ENCODE measurements at regions of chr15 and their contacts with region 1.

Region 1: DNA sequence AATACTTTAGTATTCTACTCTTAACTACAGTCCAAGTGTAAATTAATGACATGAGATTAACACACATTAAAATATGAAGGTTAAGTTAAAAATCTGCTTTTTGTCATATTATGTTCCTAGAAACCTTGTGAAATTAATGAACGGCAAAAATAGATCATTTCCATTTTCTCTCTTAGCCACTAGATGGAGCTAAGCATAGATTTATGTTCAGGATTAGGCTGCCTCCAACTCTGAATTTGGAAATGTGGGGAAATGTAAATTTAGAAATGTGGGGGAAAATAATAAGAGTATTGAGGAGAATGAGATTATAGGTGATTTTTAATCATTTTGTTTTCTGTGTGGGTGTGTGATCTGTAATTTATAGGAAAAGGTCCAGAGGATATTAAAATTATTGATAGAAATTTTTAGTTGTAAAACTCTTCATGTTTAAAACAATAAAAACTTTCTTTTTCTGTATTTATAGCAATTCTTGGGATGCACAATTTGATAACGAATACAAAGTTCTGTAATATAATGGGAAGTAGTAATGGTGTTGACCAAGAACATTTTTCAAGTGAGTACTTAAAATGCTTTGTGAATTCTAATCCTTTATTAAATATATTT is 59.2 kb downstream of the TMOD3 start:
- DNase-seq: peak in 2 of 3 donors; percentile 39 to 40
- H3K4me3 ChIP-seq: no peak overlapping the region
- H3K27ac ChIP-seq: no peak overlapping the region
- H3K4me1 ChIP-seq: no peaks in the 10 kb centered on the region
- H3K27me3 ChIP-seq: no peaks in the 10 kb centered on the region

Region 2: DNA sequence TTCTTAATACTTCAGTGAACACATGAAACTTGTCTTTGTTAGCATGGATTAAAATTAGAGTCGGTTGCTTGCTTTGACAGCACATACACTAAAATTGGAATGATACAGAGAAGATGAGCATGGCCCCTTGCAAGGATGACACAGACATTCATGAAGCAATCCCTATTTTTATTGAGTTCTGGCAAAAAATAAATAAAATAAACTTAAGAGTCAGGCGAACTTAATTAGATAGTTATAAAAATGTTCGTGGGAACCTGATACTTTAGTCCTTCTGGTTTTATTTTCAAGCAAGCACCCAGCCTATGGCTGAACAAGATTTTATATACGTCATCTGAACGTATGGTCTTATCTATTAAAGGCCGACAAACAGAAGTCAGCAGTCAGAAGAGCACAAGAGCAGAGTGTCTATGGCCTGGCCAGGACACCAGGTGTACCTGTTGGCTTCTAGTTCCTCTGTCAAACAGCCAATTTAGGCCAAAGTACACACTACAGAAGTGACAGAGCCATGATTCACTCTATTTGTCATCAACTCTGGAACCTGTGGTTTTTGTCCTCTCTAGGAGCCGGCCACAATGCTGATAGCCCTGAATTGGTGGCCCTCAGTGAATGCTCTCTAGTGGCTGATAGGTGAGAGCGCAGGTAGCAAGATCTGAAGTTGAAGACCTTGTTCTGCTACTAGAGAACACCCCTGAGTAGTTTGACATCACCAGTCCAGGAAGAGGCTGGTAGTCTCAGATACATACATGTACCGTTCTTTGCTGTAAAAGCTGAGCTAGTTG is 18.6 kb after region 1 on chr15:
- CTCF ChIA-PET with region 1: interaction called, 35 read pairs
- POLR2A ChIA-PET with region 1: no interaction called
- DNase-seq: peak in 1 of 3 donors; percentile 4
- H3K4me3 ChIP-seq: no peak overlapping the region
- H3K27ac ChIP-seq: no peak overlapping the region
- H3K4me1 ChIP-seq: no peaks in the 10 kb centered on the region
- H3K27me3 ChIP-seq: no peaks in the 10 kb centered on the region

Region 3: GRCh38 chr15:52261498-52262242 is 373.0 kb after region 1 on chr15:
- CTCF ChIA-PET with region 1: no interaction called
- POLR2A ChIA-PET with region 1: no interaction called
- DNase-seq: peak; percentile 47 to 83 (median 81)
- H3K4me3 ChIP-seq: peak overlapping the region in 2 of 7 experiments; percentile 19 to 54
- H3K27ac ChIP-seq: peak overlapping the region; percentile 56 to 62
- H3K4me1 ChIP-seq: peaks cover 5 to 24% (median 21%) of the 10 kb centered on the region in 4 experiments
- H3K27me3 ChIP-seq: no peaks in the 10 kb centered on the region